ENCODE measurements at regions of chr18 and their contacts with region 1.

Region 1: DNA sequence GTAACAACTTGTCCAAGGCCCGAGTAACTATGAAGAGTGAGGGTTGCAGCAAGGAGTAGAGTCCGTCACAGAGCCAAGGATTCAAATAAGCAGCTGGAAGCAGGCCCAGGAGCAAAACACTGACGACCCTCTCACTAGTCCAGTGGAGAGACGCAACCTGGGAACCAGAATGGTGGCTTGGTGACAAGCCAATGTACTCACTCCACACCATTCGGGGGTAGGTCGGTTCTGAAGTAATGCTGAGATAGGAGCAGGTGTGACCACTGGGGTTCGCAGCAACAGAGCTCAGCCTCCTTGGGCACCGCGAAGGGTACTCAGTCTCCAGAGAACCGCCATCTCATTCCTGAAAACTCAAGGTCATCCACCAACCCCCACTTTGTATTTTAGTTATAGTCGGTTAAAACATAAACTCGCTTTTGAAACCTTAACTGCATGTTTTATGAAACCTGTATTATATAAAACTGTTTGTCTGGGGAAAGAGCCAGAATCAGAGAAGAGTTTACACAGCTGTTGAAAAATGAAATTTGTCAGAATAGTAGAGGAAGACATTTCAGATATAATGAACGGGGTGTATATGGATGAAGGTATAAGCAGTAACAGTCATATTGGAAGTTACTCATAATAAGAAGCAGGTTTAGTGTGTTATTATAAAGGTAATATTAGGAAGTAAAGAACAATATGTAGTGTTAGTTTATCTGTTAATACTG is 8.6 kb downstream of the ANKRD62 start:
- DNase-seq: no peak
- ATAC-seq: no peak
- H3K4me3 ChIP-seq: no peak overlapping the region
- H3K27ac ChIP-seq: no peak overlapping the region
- H3K4me1 ChIP-seq: no peaks in the 10 kb centered on the region
- H3K27me3 ChIP-seq: peaks cover 7% of the 10 kb centered on the region
- CTCF ChIP-seq: no peak
- POLR2A ChIP-seq: no peak
- RAD21 ChIP-seq: no peak

Region 2: DNA sequence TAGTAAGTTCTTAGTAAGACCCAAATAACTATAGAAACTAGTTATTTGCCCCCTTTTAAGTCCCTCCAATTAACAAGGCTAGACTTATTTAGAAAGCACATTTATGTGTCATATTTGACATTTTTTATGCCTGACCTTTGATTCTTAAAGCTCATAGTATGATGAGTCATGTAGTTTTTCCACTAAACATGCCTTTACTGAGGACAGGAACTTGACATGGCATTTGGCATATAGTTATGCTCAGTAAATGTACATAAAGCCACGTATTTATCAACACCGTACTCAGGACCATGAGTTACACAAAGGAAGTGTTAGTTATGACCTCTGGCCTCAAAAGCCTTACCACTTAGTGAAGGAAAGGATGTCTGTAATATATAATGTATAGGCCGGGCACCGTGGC is 334.4 kb before region 1 on chr18:
- CTCF ChIA-PET with region 1: no interaction called
- POLR2A ChIA-PET with region 1: no interaction called
- dilution Hi-C with region 1: no loop called
- in situ Hi-C with region 1: no loop called
- intact Hi-C with region 1: no loop called
- DNase-seq: no peak
- ATAC-seq: peak; percentile 42
- H3K4me3 ChIP-seq: no peak overlapping the region
- H3K27ac ChIP-seq: no peak overlapping the region
- H3K4me1 ChIP-seq: no peaks in the 10 kb centered on the region
- H3K27me3 ChIP-seq: peaks cover 8% of the 10 kb centered on the region
- CTCF ChIP-seq: no peak
- POLR2A ChIP-seq: no peak
- RAD21 ChIP-seq: no peak

Region 3: DNA sequence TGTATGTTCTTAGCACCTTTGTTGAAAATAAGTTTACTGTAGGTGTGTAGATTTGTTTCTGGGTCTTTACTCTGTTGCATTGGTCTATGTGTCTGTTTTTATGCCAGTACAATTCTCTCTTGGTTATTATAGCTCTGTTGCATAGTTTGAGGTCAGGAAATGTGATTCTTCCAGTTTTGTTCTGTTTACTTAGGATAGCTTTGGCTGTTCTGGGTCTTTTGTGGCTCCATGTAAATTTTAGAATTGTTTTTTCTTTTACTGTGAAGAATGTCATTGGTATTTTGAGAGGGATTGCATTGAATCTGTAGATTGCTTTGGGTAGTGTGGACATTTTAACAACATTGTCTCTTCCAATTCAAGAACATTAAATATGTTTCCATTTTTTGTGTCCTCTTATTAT is 60.5 kb after region 1 on chr18:
- CTCF ChIA-PET with region 1: no interaction called
- POLR2A ChIA-PET with region 1: no interaction called
- dilution Hi-C with region 1: no loop called
- in situ Hi-C with region 1: no loop called
- intact Hi-C with region 1: loop called (anchors 5 kb)
- DNase-seq: no peak
- ATAC-seq: no peak
- H3K4me3 ChIP-seq: no peak overlapping the region
- H3K27ac ChIP-seq: no peak overlapping the region
- H3K4me1 ChIP-seq: no peaks in the 10 kb centered on the region
- H3K27me3 ChIP-seq: peaks cover 3% of the 10 kb centered on the region; the same call in 1 of the 2 replicates
- CTCF ChIP-seq: no peak
- POLR2A ChIP-seq: no peak
- RAD21 ChIP-seq: no peak